ENCODE measurements at regions of chr9 and their contacts with region 1.

Region 1: DNA sequence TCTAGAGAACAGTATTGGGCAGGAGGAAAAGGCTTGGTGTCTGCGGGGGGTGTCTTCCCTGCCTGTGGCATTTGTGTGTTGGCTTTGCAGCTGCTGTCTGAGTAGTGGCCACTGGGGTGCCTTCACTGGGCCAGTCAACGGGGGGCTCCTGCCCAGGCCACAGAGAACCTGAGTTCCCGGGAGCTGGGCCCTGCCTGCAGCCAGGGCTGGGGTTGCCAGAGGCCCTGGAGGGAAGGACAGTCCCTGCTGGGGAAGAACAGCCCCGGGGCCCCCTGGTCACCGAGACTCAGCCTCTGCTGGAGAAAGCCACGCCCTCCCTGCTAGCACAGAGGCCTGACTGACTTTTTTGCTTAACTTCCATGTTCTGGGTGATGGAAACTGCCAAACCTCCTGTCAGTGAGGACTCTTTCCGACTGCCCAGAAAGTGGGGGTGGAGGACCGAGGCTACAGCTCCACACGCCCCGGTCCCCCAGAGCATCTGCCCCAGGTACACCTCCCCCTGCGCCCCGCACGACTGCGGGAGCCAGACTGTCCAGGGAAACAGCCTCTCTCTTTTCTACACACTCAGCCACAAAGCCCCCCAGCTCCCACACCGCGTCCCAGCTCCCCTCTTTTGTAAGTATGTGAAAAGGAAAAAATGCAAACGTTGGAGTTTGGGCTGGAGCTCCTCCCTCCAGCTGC is 133.4 kb downstream of the DAB2IP start:
- DNase-seq: no peak
- H3K4me3 ChIP-seq: no peak overlapping the region
- CTCF ChIP-seq: peak; percentile 10

Region 2: GRCh38 chr9:121744687-121745395 is 40.0 kb before region 1 on chr9:
- in situ Hi-C with region 1: loop called (anchors 5 kb)
- DNase-seq: no peak
- H3K4me3 ChIP-seq: peak overlapping the region; percentile 42
- CTCF ChIP-seq: no peak

Region 3: GRCh38 chr9:121819428-121820231 is 34.8 kb after region 1 on chr9:
- in situ Hi-C with region 1: no loop called
- DNase-seq: no peak
- H3K4me3 ChIP-seq: peak overlapping the region; percentile 1
- CTCF ChIP-seq: no peak